IMR-90 (cell line): ENCODE measurements at regions of chr14 and their contacts with region 1.

Region 1: DNA sequence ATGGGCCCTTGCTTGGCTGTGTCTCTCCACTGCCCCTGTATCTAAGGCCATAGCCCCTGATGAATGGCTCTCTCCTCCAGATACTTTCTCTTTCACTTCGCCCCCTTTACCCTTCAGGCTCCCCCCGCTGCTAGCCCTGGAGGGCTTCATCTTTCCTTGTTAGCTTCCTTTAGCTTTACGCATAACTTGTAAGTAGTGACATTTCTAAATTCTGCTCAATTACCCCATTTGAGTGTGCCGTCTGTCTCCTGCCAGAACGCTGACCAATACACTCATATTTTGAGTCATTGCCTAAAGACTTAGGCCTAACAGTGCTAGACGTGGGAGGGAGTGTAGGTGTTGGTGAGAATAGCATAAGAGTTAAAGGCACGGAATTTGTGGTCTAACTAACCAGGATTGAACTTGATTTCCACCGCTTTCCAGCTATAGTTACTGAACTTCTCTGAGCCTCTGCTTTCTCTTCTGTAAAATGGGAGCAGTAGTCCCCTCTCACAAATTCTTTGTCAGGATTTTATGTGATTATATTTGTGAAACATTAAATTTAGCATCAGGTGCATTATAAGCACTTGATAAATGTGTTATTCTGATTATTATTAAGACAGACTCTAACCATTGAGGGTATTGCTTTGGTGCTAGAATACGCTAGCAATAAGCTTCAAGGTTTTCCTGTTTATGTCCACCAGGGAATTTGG is 129.3 kb downstream of the ZFP36L1 start:
- DNase-seq: peak; percentile 91
- ATAC-seq: peak; percentile 38
- H3K4me3 ChIP-seq: peak overlapping the region; percentile 6; the same call in 1 of the 2 replicates
- H3K27ac ChIP-seq: peak overlapping the region; percentile 35; the same call in 1 of the 2 replicates
- H3K4me1 ChIP-seq: peaks cover 40% of the 10 kb centered on the region
- H3K27me3 ChIP-seq: no peaks in the 10 kb centered on the region
- CTCF ChIP-seq: no peak
- POLR2A ChIP-seq: no peak
- RAD21 ChIP-seq: peak; percentile 30

Region 2: DNA sequence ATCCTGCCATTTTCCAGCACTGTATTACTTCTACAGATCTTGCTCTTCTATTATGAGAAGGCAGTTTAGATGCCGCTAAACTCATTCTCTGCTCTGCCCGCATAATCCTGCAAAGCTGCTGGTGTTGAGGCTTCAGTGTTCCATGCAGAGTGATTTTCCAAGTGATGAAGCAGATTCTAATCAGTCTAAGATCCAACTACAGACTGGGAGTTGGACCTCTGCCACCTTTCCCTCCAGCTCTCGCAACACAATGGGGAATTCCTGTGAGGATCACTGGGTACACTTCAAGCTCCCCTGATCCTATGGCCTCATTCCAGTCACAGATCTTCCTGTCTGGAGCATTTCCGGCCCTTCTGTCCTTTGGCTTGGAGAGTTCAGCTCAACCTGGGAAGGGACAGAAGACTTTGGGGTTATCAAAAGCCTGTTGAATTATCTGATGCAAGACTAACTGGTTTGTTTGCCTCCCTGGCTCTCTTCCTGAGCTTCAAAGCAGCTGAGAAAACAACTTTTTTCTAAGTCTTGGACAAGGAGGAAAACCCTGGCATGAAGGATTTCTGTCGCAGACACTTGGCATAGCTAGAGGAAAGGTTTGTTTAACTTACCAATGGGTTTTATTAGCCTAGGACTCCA is 204.6 kb before region 1 on chr14:
- CTCF ChIA-PET with region 1: no interaction called
- POLR2A ChIA-PET with region 1: no interaction called
- dilution Hi-C with region 1: no loop called
- in situ Hi-C with region 1: no loop called
- intact Hi-C with region 1: loop called (anchors 10 kb)
- DNase-seq: peak; percentile 87
- ATAC-seq: peak; percentile 62
- H3K4me3 ChIP-seq: no peak overlapping the region
- H3K27ac ChIP-seq: peak overlapping the region; percentile 69; the same call in 1 of the 2 replicates
- H3K4me1 ChIP-seq: peaks cover 11% of the 10 kb centered on the region
- H3K27me3 ChIP-seq: no peaks in the 10 kb centered on the region
- CTCF ChIP-seq: no peak
- POLR2A ChIP-seq: no peak
- RAD21 ChIP-seq: no peak

Region 3: DNA sequence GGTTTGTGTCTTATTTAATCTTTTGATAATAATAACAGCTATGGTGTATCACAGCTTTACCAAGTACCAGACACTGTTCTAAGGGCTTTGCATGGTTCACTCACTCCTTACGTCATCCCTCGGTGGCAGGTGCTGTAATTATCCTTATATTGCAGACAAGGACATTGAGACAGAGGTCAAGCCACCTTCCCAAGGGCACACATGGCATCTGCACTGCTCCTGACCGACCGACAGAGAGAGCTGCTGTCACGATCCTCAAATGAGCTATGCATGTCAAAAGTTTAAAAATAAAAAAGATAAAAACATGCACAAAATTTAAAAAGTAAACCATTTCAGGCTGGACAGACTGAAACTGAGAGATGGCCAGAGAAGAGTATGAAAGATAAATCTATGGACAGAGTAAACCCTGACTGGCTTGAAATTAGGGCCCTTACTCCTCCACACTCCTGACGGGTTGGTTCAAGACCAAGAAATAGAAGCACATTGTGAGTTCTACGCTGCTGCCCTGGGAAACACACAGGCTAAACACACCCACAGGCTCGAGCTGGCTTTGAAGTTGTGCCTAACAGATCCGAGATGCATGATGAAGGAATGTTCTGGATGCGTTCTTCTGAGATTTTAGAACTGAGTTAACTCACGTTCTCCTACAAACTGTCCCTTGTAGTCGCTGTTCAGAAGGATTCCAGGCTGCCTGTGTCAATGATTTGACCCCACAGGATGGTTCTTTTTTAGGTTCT is 139.4 kb before region 1 on chr14:
- CTCF ChIA-PET with region 1: no interaction called
- POLR2A ChIA-PET with region 1: no interaction called
- dilution Hi-C with region 1: no loop called
- in situ Hi-C with region 1: no loop called
- intact Hi-C with region 1: no loop called
- DNase-seq: no peak
- ATAC-seq: no peak
- H3K4me3 ChIP-seq: no peak overlapping the region
- H3K27ac ChIP-seq: no peak overlapping the region
- H3K4me1 ChIP-seq: peaks cover 8% of the 10 kb centered on the region
- H3K27me3 ChIP-seq: no peaks in the 10 kb centered on the region
- CTCF ChIP-seq: no peak
- POLR2A ChIP-seq: no peak
- RAD21 ChIP-seq: no peak

Region 4: GRCh38 chr14:68563246-68564131 is 100.0 kb before region 1 on chr14:
- CTCF ChIA-PET with region 1: no interaction called
- POLR2A ChIA-PET with region 1: no interaction called
- dilution Hi-C with region 1: no loop called
- in situ Hi-C with region 1: no loop called
- intact Hi-C with region 1: no loop called
- DNase-seq: peak; percentile 35
- ATAC-seq: peak; percentile 59
- H3K4me3 ChIP-seq: no peak overlapping the region
- H3K27ac ChIP-seq: peak overlapping the region; percentile 34; the same call in 1 of the 2 replicates
- H3K4me1 ChIP-seq: peaks cover 11% of the 10 kb centered on the region
- H3K27me3 ChIP-seq: no peaks in the 10 kb centered on the region
- CTCF ChIP-seq: no peak
- POLR2A ChIP-seq: no peak
- RAD21 ChIP-seq: no peak

Region 5: GRCh38 chr14:68645371-68645770 is 18.2 kb before region 1 on chr14:
- CTCF ChIA-PET with region 1: no interaction called
- POLR2A ChIA-PET with region 1: no interaction called
- dilution Hi-C with region 1: no loop called
- in situ Hi-C with region 1: no loop called
- intact Hi-C with region 1: no loop called
- DNase-seq: no peak
- ATAC-seq: no peak
- H3K4me3 ChIP-seq: no peak overlapping the region
- H3K27ac ChIP-seq: no peak overlapping the region
- H3K4me1 ChIP-seq: peaks cover 6% of the 10 kb centered on the region
- H3K27me3 ChIP-seq: no peaks in the 10 kb centered on the region
- CTCF ChIP-seq: no peak
- POLR2A ChIP-seq: no peak
- RAD21 ChIP-seq: no peak